ENCODE measurements at regions of chr1 and their contacts with region 1.

Region 1: DNA sequence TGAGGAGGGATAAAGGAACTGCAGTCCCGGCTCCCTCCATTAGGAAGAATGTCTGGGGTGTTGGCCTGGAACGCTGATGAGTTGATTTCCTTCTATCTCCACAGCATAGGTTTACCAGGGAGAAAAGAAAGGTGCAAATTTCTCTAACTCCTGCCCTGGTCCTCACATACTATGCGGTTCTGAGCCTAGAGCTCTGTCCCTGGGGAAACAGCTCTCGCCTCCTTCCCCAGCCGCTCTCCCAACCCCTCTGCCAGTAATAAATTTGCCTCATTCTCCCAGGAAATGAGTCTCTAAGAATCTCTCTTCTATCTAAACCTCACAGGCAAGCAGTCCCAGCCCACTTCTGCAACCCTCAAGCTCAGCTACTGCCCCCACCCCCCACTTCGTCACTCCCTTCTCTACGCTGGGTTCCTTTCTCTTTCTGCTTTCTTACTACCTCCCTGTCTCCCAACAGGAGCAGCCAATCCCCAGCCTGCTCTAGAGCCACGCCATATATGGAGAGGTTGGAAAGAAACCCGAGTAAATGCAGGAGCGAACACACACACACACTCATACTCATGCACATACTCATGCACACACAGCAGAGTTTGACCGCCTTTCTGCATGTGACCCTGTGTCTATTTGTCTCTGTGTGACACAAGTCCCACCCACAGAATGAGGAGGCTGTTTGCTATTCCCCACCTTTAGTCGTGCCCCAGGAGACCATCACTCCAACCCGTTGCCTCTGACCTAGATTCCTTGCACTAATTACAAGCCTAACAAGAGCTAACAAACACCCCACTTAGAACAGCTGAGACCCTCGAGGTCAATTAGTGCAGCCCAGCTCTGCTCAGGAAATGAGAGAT is 13.4 kb downstream of the PLEKHO1 start:
- DNase-seq: peak; percentile 49
- H3K4me3 Mint-ChIP-seq: peak overlapping the region; percentile 16
- H3K27ac Mint-ChIP-seq: no peak overlapping the region
- H3K4me1 Mint-ChIP-seq: peaks cover 42% of the 10 kb centered on the region
- H3K27me3 Mint-ChIP-seq: no peaks in the 10 kb centered on the region

Region 2: DNA sequence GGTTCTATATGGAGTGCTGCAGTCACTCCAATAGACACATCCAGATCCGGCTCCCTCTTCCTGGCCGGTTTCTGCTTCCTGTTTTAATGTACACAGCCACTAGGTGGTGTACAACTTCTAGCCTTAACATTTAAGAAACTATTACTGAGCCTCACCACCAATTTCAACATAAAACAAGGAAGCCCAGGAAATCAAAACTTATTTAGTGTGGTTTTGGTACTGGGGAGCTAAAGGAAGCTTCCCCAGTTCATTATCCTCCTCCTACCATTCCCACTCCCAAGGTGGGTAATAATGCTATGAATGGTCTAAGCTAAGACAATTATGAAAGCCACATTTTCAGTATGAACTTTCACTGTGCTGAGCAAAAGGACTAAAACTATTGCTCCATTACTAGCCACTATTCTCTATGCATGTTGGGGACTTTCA is 200.9 kb before region 1 on chr1:
- CTCF ChIA-PET with region 1: interaction called, 5 read pairs
- intact Hi-C with region 1: loop called (anchors 1 kb)
- DNase-seq: peak; percentile 63
- H3K4me3 Mint-ChIP-seq: no peak overlapping the region
- H3K27ac Mint-ChIP-seq: no peak overlapping the region
- H3K4me1 Mint-ChIP-seq: peaks cover 12% of the 10 kb centered on the region
- H3K27me3 Mint-ChIP-seq: no peaks in the 10 kb centered on the region

Region 3: DNA sequence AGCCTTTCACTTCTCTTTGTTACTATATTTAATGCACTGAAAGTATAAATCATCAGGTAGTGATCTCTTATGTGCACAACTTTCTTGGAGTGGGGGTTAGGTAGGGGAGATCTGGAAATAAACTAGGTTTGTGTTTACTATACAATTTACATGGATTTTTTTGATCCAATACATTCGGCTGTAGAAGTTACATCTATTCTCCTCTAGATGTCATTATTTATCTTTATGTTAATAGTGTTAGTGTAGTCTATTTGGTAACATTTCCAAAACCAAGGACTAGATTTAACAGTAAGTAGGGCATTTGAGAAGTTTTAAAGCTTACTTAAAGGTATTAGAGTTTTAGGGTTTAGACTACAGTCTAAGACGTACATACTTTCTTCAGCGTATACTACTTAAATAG is 90.1 kb before region 1 on chr1:
- CTCF ChIA-PET with region 1: interaction called, 122 read pairs
- intact Hi-C with region 1: no loop called
- DNase-seq: no peak
- H3K4me3 Mint-ChIP-seq: no peak overlapping the region
- H3K27ac Mint-ChIP-seq: no peak overlapping the region
- H3K4me1 Mint-ChIP-seq: peaks cover 23% of the 10 kb centered on the region
- H3K27me3 Mint-ChIP-seq: no peaks in the 10 kb centered on the region

Region 4: DNA sequence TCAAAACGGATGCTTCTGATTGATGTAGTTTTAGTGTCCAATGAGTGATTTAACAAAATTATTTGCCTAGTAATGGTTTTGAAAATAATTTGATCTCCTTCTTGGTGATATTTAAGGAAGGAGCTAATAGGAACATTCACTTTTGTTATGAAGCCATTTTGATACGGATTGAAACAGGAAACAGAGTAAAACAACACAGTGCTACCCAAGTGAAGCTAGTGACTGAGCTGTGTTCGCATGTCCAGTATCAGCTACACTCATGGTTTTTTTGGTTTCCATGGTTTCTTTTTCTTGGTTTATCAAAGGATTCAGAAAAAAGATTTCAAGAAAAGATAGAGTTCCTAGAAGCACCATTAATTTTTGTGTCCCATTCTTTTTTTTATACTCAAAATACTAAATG is 53.5 kb before region 1 on chr1:
- CTCF ChIA-PET with region 1: interaction called, 3 read pairs
- intact Hi-C with region 1: loop called (anchors 2 kb)
- DNase-seq: no peak
- H3K4me3 Mint-ChIP-seq: peak overlapping the region; percentile 57
- H3K27ac Mint-ChIP-seq: peak overlapping the region; percentile 79
- H3K4me1 Mint-ChIP-seq: peaks cover 60% of the 10 kb centered on the region
- H3K27me3 Mint-ChIP-seq: no peaks in the 10 kb centered on the region

Region 5: DNA sequence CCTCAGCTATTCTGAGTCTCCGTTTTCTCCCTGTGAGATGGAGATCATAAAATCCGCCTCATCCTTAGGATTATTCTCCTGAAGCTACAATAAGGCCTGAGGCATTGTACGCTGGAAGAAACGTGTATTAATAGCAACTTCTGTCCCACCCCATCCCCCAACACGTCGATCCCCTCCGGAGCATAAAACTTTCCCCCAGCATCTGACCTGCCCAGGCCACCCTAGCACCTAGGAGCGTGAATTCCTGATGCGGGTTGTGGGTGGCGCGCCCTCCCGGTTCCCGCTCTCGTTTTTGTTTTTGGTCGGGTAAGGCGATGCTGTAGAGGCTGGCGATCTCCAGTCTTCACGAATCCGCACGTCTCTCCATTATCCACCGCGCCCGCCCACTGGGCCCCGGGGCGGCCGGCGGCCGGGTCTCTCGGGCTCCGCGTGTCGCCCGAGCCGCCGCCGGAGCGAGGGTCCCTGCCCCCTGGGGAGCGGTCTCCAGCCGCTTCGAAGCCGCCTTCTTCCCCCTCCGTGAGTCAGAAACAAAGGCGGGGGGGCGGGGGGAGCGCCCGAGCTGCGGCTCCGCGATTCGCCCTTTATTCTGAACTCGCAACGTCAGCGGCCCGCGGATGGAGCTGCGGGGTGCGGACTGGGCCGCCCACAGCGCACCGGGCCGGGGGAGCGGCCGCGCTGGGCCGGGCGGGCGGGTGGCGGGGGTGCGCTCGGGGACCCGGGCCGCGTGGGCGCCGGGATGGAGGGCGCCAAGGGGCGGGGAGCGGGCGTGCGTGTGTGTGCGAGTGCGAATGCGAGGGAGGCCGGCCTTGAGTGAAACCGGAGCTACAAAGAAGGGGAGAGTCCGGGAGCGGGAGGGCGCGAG is 13.6 kb before region 1 on chr1 and contains the start of gene PLEKHO1:
- CTCF ChIA-PET with region 1: interaction called, 6 read pairs
- intact Hi-C with region 1: loop called (anchors 1 kb)
- DNase-seq: peak; percentile 81
- H3K4me3 Mint-ChIP-seq: peak within 1 kb of the TSS; percentile 75
- H3K27ac Mint-ChIP-seq: peak within 1 kb of the TSS; percentile 72
- H3K4me1 Mint-ChIP-seq: peaks cover 44% of the 10 kb centered on the region
- H3K27me3 Mint-ChIP-seq: no peaks in the 10 kb centered on the region
- total RNA-seq, gene PLEKHO1: 4.4 to 4.7 TPM

Region 6: GRCh38 chr1:150176593-150176992 is 13.5 kb after region 1 on chr1:
- CTCF ChIA-PET with region 1: interaction called, 11 read pairs
- intact Hi-C with region 1: no loop called
- DNase-seq: no peak
- H3K4me3 Mint-ChIP-seq: no peak overlapping the region
- H3K27ac Mint-ChIP-seq: no peak overlapping the region
- H3K4me1 Mint-ChIP-seq: no peaks in the 10 kb centered on the region
- H3K27me3 Mint-ChIP-seq: no peaks in the 10 kb centered on the region

Region 7: DNA sequence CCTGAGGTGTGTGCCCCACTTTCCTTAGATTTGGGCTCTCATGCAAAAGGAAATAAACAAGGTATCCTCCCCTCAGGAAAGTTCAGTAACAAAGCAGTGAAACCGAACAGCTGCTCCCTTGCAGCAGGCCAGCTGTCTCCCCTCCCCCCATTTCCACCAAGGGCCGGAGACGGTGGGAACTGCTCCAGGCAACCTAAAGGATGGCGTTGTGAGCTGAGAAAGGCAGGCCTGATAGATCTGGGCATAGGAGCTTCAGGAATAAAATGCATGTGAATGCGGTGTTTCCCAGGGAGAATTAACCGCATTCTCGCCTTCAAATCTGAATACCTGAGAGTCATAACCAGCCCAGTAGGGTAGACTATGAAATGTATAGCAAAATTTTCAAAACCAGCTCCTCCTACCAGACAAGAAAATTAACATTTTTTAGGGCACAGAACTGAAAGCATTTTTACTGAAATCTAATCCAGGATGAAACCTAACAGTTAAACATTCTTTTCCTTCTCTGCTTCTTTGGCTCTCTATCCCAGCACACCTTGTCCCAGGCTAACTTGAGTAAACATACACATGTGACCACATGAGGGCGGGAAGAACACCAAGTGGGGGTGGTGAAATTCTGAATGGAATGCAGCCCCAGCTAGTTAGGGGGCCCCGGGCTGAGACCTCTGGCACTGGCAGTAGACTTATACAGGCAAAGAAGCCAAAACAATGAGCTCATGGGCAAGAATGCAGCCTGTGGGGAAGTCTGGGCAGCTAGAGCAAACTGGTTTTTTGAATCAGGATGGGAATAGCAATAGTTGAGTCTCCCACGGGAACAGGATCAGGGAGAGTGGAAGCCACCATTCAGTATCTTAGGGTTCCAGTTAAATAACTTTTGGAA is 404.9 kb after region 1 on chr1:
- CTCF ChIA-PET with region 1: no interaction called
- intact Hi-C with region 1: no loop called
- DNase-seq: peak; percentile 67
- H3K4me3 Mint-ChIP-seq: peak overlapping the region; percentile 71
- H3K27ac Mint-ChIP-seq: peak overlapping the region; percentile 99
- H3K4me1 Mint-ChIP-seq: peaks cover 94% of the 10 kb centered on the region
- H3K27me3 Mint-ChIP-seq: no peaks in the 10 kb centered on the region

Region 8: DNA sequence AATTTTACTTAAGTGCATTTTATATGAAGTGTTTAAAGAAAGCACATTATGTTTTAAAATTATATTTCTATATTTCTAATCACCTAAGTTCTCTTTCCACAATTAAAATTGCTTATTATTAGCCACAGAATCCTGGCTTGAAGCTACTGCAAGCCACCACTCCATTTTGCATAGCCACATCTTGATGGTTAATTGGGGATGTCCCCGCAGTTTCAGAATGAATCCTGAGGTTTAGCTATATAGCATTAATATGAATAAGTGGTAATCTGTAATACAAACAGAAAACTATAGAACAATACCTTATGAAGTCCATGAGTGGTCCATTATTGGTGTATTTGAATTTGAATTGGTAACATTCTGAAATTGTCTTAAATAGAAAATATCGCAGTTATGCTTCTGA is 545.5 kb after region 1 on chr1:
- CTCF ChIA-PET with region 1: no interaction called
- intact Hi-C with region 1: no loop called
- DNase-seq: peak; percentile 64
- H3K4me3 Mint-ChIP-seq: no peak overlapping the region
- H3K27ac Mint-ChIP-seq: no peak overlapping the region
- H3K4me1 Mint-ChIP-seq: peaks cover 5% of the 10 kb centered on the region
- H3K27me3 Mint-ChIP-seq: peaks cover 2% of the 10 kb centered on the region

Measured in activated naive CD4-positive, alpha-beta T cell treated with anti-CD3 and anti-CD28 coated beads for 36 hours (primary cell).